MCF 10A (cell line): ENCODE measurements at regions of chr3 and their contacts with region 1.

Region 1: DNA sequence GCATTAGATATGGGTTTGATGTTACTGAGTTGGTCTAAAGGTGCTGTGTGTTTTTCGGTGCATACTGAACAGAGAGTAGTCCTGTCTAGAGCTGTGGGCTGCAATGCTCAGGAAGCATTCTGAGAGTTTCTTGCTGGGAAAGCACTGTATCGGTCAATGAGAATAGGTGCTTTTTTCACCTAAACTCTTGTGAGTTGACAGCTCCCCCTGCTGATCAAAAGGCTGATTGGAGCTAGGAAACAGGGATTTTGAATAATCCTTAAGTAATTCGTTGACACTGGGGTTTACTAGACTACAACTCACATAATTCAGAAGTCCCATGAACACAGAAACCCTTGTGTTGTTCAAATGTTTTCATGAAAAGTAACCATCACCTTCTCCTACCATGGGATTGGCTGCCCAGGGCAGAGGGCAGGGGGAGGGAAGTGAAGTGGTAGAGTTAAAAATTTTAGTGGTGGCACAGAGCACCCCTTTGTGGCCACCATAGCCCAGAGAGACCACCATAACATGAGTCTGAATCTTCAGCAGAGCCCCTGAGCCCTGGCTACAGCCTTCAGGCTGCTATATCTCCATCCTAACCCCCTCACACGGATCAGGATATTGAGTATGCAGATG is 13.0 kb upstream of the MANF start:
- DNase-seq: peak; percentile 77
- H3K4me3 Mint-ChIP-seq: no peak overlapping the region
- H3K27ac Mint-ChIP-seq: no peak overlapping the region
- H3K4me1 Mint-ChIP-seq: no peaks in the 10 kb centered on the region
- H3K27me3 Mint-ChIP-seq: no peaks in the 10 kb centered on the region
- CTCF ChIP-seq: peak; percentile 86

Region 2: DNA sequence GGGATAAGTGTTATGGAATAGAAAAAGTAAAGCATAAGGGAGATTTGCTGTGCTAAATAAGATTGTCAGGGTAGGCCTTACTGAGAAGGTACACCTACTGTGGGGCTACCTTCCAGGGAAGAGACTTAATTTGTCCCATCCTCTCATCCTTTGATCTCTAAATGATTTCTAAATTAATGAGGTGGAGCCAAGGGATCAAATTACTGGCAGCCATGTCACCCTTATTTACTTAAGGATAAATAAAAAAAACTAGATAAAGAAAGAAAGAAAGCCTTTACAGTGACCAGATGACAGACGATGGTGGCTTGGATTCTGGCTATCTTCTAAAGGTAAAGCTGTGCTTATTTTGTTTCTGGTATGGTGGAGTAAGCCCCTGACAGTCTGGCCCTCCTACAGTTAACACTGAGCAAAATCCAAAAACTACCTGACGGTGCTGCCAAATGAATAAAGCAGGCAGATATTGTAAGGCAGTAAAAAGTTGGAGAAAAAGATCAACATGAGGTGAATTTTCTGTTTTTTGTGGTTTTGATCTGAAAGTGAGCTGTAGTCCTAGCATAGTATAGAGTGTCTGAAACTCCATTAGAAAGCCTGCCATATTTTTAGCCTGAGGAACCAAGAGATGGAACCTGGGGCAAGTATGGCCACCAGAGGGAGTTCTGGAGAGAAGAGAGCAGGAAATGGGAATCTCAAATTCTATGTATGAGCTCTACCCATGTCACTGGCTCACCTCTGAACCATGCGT is 272.1 kb before region 1 on chr3:
- CTCF ChIA-PET with region 1: interaction called, 170 read pairs
- POLR2A ChIA-PET with region 1: no interaction called
- intact Hi-C with region 1: loop called (anchors 1 kb)
- DNase-seq: peak; percentile 73
- H3K4me3 Mint-ChIP-seq: no peak overlapping the region
- H3K27ac Mint-ChIP-seq: no peak overlapping the region
- H3K4me1 Mint-ChIP-seq: no peaks in the 10 kb centered on the region
- H3K27me3 Mint-ChIP-seq: peaks cover 19% of the 10 kb centered on the region
- CTCF ChIP-seq: peak; percentile 65

Region 3: DNA sequence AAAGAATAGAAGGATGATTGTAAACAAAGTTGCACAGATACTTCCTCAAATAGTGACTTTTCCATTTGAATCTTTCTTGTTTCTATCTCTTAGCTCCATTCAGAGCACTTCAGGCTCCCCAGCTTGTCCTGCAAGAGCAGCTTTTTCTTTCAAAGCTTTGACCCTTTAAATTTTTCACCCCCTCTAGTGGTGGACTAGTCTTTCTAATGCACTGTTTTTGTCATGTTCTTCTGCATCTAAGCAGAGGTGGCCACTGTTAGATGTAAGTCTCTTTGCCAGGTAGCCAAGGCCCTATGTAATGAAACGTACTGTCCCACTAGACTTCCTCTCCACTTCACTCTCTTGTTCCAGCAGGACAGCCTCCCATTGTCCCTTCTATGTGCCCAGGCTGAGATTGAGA is 61.0 kb before region 1 on chr3:
- CTCF ChIA-PET with region 1: interaction called, 4 read pairs
- POLR2A ChIA-PET with region 1: no interaction called
- intact Hi-C with region 1: loop called (anchors 2 kb)
- DNase-seq: peak; percentile 47
- H3K4me3 Mint-ChIP-seq: no peak overlapping the region
- H3K27ac Mint-ChIP-seq: no peak overlapping the region
- H3K4me1 Mint-ChIP-seq: no peaks in the 10 kb centered on the region
- H3K27me3 Mint-ChIP-seq: no peaks in the 10 kb centered on the region
- CTCF ChIP-seq: peak; percentile 22

Region 4: DNA sequence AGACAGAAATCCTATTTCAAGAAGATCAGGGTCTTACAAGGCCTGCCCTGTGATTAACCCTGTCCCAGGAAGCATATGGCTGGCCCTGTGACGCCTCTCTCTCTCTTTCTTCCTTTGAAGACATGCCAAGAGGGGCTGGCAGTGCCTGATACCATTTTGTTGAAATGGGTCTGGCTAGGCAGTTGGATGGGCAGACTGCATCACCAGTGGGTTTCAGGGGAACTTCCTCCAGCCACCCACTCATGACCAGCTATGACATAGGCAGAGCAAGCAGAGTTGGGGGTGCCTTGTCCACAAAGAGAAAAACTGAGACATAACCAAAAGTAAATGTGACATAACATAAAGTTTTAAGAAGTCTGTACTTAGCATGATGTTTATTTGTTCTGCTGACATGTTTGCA is 18.4 kb before region 1 on chr3:
- CTCF ChIA-PET with region 1: interaction called, 11 read pairs
- POLR2A ChIA-PET with region 1: no interaction called
- intact Hi-C with region 1: no loop called
- DNase-seq: no peak
- H3K4me3 Mint-ChIP-seq: no peak overlapping the region
- H3K27ac Mint-ChIP-seq: no peak overlapping the region
- H3K4me1 Mint-ChIP-seq: no peaks in the 10 kb centered on the region
- H3K27me3 Mint-ChIP-seq: no peaks in the 10 kb centered on the region
- CTCF ChIP-seq: no peak